Posterior vena cava (tissue), 2 donors: ENCODE measurements at regions of chr2 and their contacts with region 1.

Region 1: DNA sequence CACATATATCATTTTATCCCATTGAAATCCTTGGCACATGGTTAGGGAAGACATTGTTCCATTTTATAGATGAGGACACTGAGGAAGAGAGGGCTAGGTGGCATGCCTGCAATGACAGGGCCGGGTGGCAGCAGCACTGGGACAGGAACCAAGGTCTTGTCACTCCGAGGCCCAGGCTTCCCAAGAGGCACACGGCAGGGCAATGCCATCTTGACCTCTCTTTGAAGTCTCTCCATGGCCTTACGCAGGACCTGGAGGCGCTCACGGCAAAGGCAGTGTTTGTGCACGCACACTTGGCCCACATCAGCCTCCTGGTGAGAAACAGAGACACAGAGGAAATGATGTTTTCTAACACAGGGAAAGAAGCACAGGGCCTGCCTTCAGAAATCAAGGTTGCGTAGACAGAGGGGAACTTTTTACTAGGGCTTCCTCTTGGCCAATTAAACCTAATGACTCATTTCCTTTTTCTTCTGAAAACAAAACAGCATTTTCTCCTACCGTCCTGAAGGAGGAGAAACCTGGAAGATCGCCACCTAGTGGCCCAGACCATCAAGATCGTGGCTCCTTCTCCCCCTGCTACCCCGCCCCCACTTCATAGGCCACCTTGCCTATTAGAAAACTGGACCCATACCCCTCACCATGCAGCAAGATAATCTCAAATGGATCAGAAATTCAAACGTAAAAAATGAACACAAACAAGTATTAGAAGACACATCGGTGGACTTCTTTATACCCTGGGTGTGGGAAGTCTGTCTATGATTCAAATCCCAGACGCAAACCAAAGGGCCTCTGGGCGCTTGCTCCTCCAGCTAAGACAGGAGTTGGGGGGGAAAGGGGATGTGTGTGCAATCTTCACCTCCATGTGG is 74.6 kb upstream of the SP3 start:
- DNase-seq: peak; percentile 96

Region 2: GRCh38 chr2:173402405-173402974 is 637.3 kb before region 1 on chr2:
- intact Hi-C with region 1: loop called in 1 of 2 experiments (anchors 10 kb)
- DNase-seq: peak; percentile 89

Region 3: GRCh38 chr2:173982918-173983317 is 56.9 kb before region 1 on chr2:
- intact Hi-C with region 1: loop called in 1 of 2 experiments (anchors 10 kb)
- DNase-seq: no peak